HepG2 (cell line): ENCODE measurements at regions of chr18 and their contacts with region 1.

Region 1: DNA sequence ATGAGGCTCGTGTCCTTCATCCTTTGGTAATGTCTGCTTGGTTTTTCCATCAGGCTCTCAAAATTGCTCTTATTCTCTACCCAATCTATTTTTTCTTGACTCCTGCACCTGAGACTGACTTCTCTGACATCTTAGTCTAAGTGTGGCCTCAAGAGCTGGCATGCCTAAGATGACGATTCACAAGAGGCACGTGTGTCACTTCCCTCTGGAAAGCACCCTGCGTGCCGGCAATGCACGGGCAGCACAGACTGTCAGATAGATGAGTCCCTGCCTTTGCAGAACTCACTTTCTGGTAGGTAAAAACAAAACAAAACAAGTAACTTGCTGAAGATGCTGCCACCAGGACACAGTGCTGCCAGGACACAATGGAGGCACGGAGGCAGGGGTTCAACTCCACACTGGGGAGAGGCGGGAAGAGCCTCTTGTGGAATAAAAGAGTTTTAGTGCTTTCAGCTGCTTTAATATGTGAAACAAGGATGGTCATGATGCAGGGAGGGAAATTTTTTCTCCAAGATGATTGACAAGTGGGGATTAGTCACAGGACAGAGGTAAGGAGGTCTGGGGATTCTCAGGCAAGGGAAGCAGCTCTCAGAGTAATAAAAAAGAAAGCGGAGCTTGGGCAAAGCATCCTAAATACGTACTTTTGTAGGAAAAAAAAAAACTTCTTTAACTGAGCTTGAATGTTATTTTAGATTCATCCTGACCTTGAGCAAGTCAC is 27.3 kb downstream of the CYB5A start:
- DNase-seq: no peak
- ATAC-seq: no peak
- H3K4me3 ChIP-seq: no peak overlapping the region
- H3K27ac ChIP-seq: peak overlapping the region; percentile 77
- H3K4me1 ChIP-seq: peaks cover 60% of the 10 kb centered on the region
- H3K27me3 ChIP-seq: no peaks in the 10 kb centered on the region
- CTCF ChIP-seq: no peak
- EP300 ChIP-seq: no peak
- POLR2A ChIP-seq: no peak
- RAD21 ChIP-seq: no peak

Region 2: DNA sequence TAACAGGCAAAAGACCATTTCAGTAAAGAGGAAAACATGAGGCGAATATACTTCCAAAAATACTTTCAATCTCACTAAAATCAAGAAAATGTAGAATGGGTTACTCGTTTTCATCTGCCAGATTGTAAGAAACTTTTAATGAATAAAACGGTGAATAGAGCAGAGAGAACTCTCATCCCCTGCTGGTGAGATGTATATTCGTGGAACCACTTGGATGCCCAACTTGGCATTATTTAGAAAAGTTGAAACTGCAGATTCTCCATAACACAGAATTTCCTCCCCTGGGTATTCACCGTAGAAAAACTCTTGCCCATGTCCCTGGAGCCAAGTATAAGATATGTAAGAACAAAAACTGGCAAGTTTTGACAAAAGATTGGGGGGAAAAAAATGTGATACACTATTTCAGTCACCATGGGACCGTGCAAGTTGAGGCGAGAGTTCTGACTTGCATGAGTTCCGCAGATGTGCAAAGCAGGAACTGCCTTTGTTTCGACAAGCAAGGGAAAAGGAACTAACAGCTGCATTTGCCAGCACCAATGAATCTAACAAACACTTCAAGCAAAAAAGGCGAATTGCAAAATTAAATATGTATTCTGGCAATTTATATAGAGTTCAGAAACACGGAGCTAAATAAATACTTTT is 101.3 kb before region 1 on chr18:
- CTCF ChIA-PET with region 1: no interaction called
- POLR2A ChIA-PET with region 1: no interaction called
- in situ Hi-C with region 1: no loop called
- intact Hi-C with region 1: no loop called
- DNase-seq: no peak
- ATAC-seq: no peak
- H3K4me3 ChIP-seq: no peak overlapping the region
- H3K27ac ChIP-seq: no peak overlapping the region
- H3K4me1 ChIP-seq: peaks cover 12% of the 10 kb centered on the region; the same call in 1 of the 2 replicates
- H3K27me3 ChIP-seq: no peaks in the 10 kb centered on the region; a peak in 1 of 5 replicates
- CTCF ChIP-seq: no peak
- EP300 ChIP-seq: no peak
- POLR2A ChIP-seq: no peak
- RAD21 ChIP-seq: no peak

Region 3: DNA sequence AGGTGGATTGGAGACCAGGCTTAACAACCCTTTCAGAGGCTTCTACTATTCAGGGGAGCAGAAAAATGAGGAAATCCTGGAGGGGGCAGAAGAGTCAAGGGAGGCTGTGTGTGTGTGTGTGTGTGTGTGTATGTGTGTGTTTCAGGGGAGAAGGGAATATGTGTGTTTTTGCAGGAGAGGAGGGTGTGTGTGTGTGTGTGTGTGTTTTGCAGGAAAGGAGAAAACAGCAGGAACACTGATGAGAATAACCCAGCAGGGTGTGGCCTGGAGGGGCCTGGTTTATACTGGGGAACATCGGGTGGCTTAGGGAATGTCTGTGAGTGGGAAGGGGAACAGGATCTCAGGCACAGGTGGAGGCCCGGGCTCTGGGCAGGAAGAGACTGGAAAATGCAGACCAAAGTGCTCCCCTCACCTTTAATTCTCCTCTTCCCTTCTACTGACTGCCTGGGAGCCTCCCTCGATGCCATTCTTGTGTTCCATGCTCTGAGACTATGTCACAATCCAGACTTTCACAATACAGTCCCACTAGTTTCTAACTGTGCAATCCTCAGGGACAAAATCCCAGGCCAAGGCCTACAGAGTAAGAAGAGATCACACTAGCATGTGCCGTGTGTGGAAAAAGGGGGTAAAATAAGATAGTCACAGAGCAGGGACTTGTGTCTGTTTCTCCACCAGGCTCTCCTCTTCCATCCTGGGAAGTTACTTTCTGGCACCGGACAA is 17.3 kb after region 1 on chr18:
- CTCF ChIA-PET with region 1: no interaction called
- POLR2A ChIA-PET with region 1: interaction called, 5 read pairs
- in situ Hi-C with region 1: no loop called
- intact Hi-C with region 1: loop called (anchors 1 kb)
- DNase-seq: peak; percentile 81
- ATAC-seq: peak; percentile 86
- H3K4me3 ChIP-seq: peak overlapping the region in 2 of 3 experiments; percentile 24 to 59; a peak in 3 of 6 replicates
- H3K27ac ChIP-seq: peak overlapping the region; percentile 84
- H3K4me1 ChIP-seq: peaks cover 94% of the 10 kb centered on the region
- H3K27me3 ChIP-seq: no peaks in the 10 kb centered on the region
- CTCF ChIP-seq: no peak
- EP300 ChIP-seq: peak in 1 of 2 experiments; percentile 48; a peak in 1 of 4 replicates
- POLR2A ChIP-seq: peak in 1 of 2 experiments; percentile 23; a peak in 1 of 4 replicates
- RAD21 ChIP-seq: no peak